Mammary epithelial cell (primary cell): ENCODE measurements at regions of chr2 and their contacts with region 1.

Region 1: DNA sequence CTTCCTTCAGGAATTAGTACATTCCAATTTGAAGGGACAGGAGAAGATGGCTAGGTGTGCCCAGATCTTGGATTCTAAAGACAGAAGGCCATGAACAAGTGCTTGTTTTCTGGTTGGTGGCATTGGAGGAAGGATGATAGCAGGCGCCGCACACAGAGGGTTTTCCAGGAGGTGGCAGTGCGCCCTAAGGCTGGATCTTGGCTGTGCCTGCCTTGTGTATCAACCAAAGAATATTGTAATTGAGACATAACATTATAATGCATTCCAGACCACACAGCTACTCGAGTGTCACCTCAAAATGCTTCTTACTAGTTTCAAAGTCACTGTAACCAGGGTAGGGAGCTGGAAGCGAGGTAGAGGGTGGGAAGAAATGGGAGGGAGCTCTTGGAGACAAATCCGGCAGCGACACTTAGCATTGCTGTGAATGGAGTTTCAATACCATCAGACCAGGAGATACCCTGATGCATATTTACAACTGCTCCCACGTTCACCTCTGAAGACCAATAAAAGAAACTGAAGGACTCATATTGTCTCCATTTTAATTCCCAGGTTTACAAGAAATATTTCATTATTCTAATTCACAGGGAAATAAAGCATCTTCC is 42.5 kb downstream of the CPO start:
- DNase-seq: peak; percentile 64
- H3K4me3 ChIP-seq: no peak overlapping the region
- H3K27ac ChIP-seq: no peak overlapping the region
- H3K4me1 ChIP-seq: peaks cover 21% of the 10 kb centered on the region
- H3K27me3 ChIP-seq: no peaks in the 10 kb centered on the region
- CTCF ChIP-seq: peak; percentile 90 to 92

Region 2: DNA sequence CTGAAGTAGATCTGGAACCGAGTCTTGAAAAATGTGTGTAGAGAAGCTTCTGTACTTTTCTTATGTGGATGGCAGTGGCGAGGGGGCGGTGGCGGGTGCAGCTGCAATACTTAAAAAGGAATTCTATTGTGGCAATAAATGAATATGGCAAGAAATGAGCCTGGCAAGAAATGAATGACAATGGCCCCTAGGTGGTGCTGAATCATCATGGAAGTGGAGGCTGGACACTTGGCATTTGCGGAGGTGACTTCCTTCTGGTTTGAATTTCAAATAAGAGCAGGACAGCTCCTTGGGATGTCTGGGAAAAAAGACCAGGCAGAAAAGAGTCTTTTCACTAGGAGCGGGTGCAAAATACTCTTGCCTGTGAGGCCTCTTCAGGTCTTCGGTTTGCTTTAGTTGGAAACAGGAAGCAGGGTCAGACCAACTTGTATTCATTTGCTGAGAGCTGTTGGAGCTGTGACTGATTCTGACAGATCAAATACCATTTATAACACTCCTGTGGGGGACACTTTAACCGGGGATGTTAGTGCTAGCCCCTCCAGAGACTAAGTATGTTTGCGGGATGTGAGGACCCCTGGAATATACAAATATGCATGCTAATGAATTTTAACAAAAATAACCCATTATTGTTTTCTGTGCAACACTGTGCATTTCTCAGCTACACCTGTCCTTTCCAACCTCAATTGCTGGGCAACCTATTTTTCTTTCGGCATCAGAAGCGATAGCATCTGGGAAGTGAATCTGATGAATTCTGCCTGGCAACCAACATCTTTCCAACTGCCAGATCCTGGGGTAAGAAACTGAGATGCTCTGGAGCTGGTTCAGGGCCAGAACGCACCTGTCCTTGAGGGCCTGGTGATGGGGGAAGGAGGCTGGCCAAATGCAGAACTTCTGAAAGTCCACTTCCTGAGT is 181.1 kb before region 1 on chr2:
- CTCF ChIA-PET with region 1: no interaction called
- dilution Hi-C with region 1: no loop called
- in situ Hi-C with region 1: no loop called
- intact Hi-C with region 1: loop called (anchors 1 kb)
- DNase-seq: peak; percentile 69
- H3K4me3 ChIP-seq: no peak overlapping the region
- H3K27ac ChIP-seq: no peak overlapping the region
- H3K4me1 ChIP-seq: no peaks in the 10 kb centered on the region
- H3K27me3 ChIP-seq: no peaks in the 10 kb centered on the region
- CTCF ChIP-seq: peak; percentile 66 to 75

Region 3: DNA sequence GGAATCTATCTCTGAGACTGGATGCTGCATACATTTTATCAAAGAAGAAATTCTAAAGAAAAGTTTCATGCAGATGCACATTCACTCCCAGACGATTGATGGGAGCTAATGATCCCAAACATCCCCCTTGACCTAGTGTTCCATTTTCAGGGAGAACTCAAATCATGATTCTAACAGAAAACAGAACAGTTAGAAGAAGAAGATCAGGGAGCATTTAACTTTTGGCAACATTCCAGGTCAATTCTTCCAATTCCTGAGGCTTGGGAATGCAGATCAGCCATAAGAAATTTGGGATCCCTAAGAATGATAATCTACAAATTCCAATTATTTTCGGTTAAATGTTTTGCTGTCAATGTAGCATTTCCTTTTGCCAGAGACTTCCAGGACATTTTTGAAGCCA is 54.0 kb after region 1 on chr2:
- CTCF ChIA-PET with region 1: no interaction called
- dilution Hi-C with region 1: no loop called
- in situ Hi-C with region 1: no loop called
- intact Hi-C with region 1: no loop called
- DNase-seq: no peak
- H3K4me3 ChIP-seq: no peak overlapping the region
- H3K27ac ChIP-seq: no peak overlapping the region
- H3K4me1 ChIP-seq: peaks cover 16% of the 10 kb centered on the region
- H3K27me3 ChIP-seq: no peaks in the 10 kb centered on the region
- CTCF ChIP-seq: no peak

Region 4: GRCh38 chr2:207091176-207091575 is 109.3 kb after region 1 on chr2:
- CTCF ChIA-PET with region 1: no interaction called
- dilution Hi-C with region 1: no loop called
- in situ Hi-C with region 1: no loop called
- intact Hi-C with region 1: loop called (anchors 5 kb)
- DNase-seq: no peak
- H3K4me3 ChIP-seq: no peak overlapping the region
- H3K27ac ChIP-seq: no peak overlapping the region
- H3K4me1 ChIP-seq: no peaks in the 10 kb centered on the region
- H3K27me3 ChIP-seq: no peaks in the 10 kb centered on the region
- CTCF ChIP-seq: no peak

Region 5: DNA sequence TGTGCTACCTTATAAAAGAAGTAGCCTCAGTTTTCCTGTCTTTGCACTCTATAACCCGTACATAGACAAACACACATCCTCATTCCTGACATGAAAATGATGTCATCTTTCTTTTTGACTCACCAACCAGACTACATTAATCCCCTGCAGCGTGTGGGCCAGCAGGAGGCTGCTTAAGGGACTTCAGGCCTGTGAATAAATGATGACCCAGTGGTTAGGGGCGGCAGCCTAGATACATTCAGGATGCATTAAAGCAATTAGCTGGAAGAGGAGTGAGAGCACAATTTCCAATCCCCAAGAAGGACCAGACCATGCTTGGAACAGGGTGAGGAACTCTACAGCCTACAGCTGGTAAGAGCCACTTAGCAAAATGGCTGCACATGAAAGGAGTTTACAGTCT is 241.2 kb after region 1 on chr2:
- CTCF ChIA-PET with region 1: no interaction called
- dilution Hi-C with region 1: no loop called
- in situ Hi-C with region 1: no loop called
- intact Hi-C with region 1: no loop called
- DNase-seq: peak; percentile 43
- H3K4me3 ChIP-seq: no peak overlapping the region
- H3K27ac ChIP-seq: no peak overlapping the region
- H3K4me1 ChIP-seq: peaks cover 8% of the 10 kb centered on the region
- H3K27me3 ChIP-seq: no peaks in the 10 kb centered on the region
- CTCF ChIP-seq: no peak

Region 6: GRCh38 chr2:207238831-207239701 is 257.2 kb after region 1 on chr2:
- CTCF ChIA-PET with region 1: no interaction called
- dilution Hi-C with region 1: no loop called
- in situ Hi-C with region 1: no loop called
- intact Hi-C with region 1: loop called (anchors 5 kb)
- DNase-seq: peak; percentile 100
- H3K4me3 ChIP-seq: peak overlapping the region; percentile 31 to 84 (median 78)
- H3K27ac ChIP-seq: peak overlapping the region; percentile 100
- H3K4me1 ChIP-seq: peaks cover 51% of the 10 kb centered on the region
- H3K27me3 ChIP-seq: no peaks in the 10 kb centered on the region
- CTCF ChIP-seq: no peak

Region 7: GRCh38 chr2:207334624-207335371 is 353.0 kb after region 1 on chr2:
- CTCF ChIA-PET with region 1: no interaction called
- dilution Hi-C with region 1: no loop called
- in situ Hi-C with region 1: no loop called
- intact Hi-C with region 1: loop called (anchors 5 kb)
- DNase-seq: peak; percentile 99
- H3K4me3 ChIP-seq: peak overlapping the region; percentile 3 to 26 (median 20)
- H3K27ac ChIP-seq: peak overlapping the region; percentile 99
- H3K4me1 ChIP-seq: peaks cover 87% of the 10 kb centered on the region
- H3K27me3 ChIP-seq: no peaks in the 10 kb centered on the region
- CTCF ChIP-seq: no peak

Region 8: GRCh38 chr2:207993151-207993763 is 1011.4 kb after region 1 on chr2:
- CTCF ChIA-PET with region 1: no interaction called
- dilution Hi-C with region 1: no loop called
- in situ Hi-C with region 1: no loop called
- intact Hi-C with region 1: no loop called
- DNase-seq: peak; percentile 59
- H3K4me3 ChIP-seq: no peak overlapping the region
- H3K27ac ChIP-seq: no peak overlapping the region
- H3K4me1 ChIP-seq: peaks cover 8% of the 10 kb centered on the region
- H3K27me3 ChIP-seq: no peaks in the 10 kb centered on the region
- CTCF ChIP-seq: no peak